B cell (primary cell): ENCODE measurements at regions of chr1 and their contacts with region 1.

Region 1: DNA sequence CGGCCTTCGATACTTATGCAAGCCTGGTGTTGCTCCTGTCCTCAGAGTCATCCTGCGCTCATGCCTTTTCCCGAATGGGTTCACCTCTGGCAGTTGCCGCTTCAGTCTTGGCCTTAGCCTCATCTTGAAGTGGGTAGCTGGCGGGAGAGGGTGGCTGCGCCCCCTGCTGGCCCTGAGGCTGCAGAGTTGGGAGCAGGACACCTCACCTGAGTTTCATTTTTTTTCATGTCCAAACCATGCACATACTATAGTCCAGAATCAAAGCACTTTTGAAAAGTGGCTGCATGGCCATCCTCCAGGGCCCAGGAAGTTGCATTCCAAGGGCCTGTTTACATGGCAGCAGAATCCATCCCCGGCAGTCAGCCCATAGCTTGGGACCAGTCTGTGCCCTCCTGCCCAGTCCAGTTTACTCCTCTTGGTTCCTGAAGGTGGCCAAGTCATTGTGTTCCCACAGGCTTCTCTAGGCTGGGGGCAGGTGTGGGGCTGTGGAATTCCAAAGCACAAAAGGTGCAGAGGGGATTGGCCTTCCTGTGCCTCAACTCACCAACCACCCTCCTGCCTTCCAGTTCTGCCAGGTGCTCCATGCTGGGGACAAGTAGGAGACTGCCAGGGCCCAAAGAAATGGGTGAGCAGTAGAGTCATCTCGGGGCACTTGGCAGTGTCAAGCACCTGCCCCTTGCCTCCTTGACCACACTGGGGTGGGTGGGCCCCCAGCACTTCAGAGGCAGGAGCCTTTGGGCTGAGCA is 44.0 kb downstream of the YARS1 start:
- DNase-seq: peak; percentile 79
- ATAC-seq: peak; percentile 79
- H3K4me3 ChIP-seq: no peak overlapping the region
- H3K4me3 Mint-ChIP-seq: no peak overlapping the region
- H3K27ac ChIP-seq: no peak overlapping the region
- H3K27ac Mint-ChIP-seq: peak overlapping the region; percentile 46
- H3K4me1 ChIP-seq: peaks cover 0 to 3% of the 10 kb centered on the region in 2 donors
- H3K4me1 Mint-ChIP-seq: peaks cover 3% of the 10 kb centered on the region
- H3K27me3 ChIP-seq: no peaks in the 10 kb centered on the region
- H3K27me3 Mint-ChIP-seq: no peaks in the 10 kb centered on the region
- CTCF ChIP-seq: peak; percentile 89

Region 2: GRCh38 chr1:31505911-31506497 is 1267.2 kb before region 1 on chr1:
- CTCF ChIA-PET with region 1: no interaction called
- POLR2A ChIA-PET with region 1: no interaction called
- intact Hi-C with region 1: no loop called
- DNase-seq: peak; percentile 55
- ATAC-seq: peak; percentile 21
- H3K4me3 ChIP-seq: no peak overlapping the region
- H3K4me3 Mint-ChIP-seq: no peak overlapping the region
- H3K27ac ChIP-seq: no peak overlapping the region
- H3K27ac Mint-ChIP-seq: no peak overlapping the region
- H3K4me1 ChIP-seq: peaks cover 15 to 19% of the 10 kb centered on the region in 2 donors
- H3K4me1 Mint-ChIP-seq: peaks cover 12% of the 10 kb centered on the region
- H3K27me3 ChIP-seq: peaks cover 0 to 10% (median 4%) of the 10 kb centered on the region in 4 experiments
- H3K27me3 Mint-ChIP-seq: peaks cover 19% of the 10 kb centered on the region
- CTCF ChIP-seq: no peak

Region 3: GRCh38 chr1:32400876-32401631 is 372.1 kb before region 1 on chr1:
- CTCF ChIA-PET with region 1: interaction called, 57 read pairs
- POLR2A ChIA-PET with region 1: no interaction called
- intact Hi-C with region 1: no loop called
- DNase-seq: peak; percentile 64
- ATAC-seq: peak; percentile 69
- H3K4me3 ChIP-seq: no peak overlapping the region
- H3K4me3 Mint-ChIP-seq: peak overlapping the region; percentile 13
- H3K27ac ChIP-seq: no peak overlapping the region
- H3K27ac Mint-ChIP-seq: no peak overlapping the region
- H3K4me1 ChIP-seq: peaks cover 0 to 3% of the 10 kb centered on the region in 2 donors
- H3K4me1 Mint-ChIP-seq: peaks cover 2% of the 10 kb centered on the region
- H3K27me3 ChIP-seq: no peaks in the 10 kb centered on the region
- H3K27me3 Mint-ChIP-seq: peaks cover 3% of the 10 kb centered on the region
- CTCF ChIP-seq: peak; percentile 79

Region 4: DNA sequence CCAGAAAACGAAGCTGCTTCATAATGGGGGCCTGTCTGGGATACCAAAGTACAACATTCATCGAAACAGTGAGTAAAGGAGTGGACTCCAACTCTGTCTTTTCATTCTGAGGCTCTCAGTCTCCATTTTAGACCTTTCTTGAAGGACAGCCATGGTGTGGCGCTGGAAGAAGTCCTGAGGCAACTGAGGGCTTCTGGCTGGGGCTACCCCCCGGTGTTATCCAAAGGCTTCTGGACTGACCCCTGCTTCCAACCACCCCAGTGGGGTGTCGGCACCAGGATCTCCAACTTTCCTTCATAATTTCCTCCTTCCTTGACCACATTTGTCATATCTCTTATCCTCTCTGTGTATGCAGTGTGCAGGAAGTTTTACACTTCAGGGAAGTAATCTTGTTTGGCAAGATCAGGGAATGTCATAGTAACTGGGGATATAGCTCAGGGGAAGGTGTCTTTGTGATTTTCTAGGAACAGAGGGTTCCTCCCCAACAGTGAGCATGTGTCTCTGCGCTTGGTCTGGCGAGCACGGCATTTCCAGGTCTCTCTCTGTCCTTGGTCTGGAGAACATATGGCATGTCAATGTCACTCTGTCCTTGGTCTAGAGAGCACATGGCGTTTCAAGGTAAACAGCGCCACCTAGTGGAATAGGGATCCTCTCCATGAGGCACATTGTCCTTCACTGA is 359.5 kb before region 1 on chr1:
- CTCF ChIA-PET with region 1: no interaction called
- POLR2A ChIA-PET with region 1: no interaction called
- intact Hi-C with region 1: no loop called
- DNase-seq: peak; percentile 86
- ATAC-seq: peak; percentile 57
- H3K4me3 ChIP-seq: no peak overlapping the region
- H3K4me3 Mint-ChIP-seq: no peak overlapping the region
- H3K27ac ChIP-seq: no peak overlapping the region
- H3K27ac Mint-ChIP-seq: no peak overlapping the region
- H3K4me1 ChIP-seq: no peaks in the 10 kb centered on the region
- H3K4me1 Mint-ChIP-seq: peaks cover 2% of the 10 kb centered on the region
- H3K27me3 ChIP-seq: peaks cover 0 to 6% (median 5%) of the 10 kb centered on the region in 4 experiments
- H3K27me3 Mint-ChIP-seq: peaks cover 19% of the 10 kb centered on the region
- CTCF ChIP-seq: peak; percentile 94

Region 5: GRCh38 chr1:32521165-32521564 is 252.0 kb before region 1 on chr1:
- CTCF ChIA-PET with region 1: interaction called, 76 read pairs
- POLR2A ChIA-PET with region 1: interaction called, 5 read pairs
- intact Hi-C with region 1: no loop called
- DNase-seq: no peak
- ATAC-seq: no peak
- H3K4me3 ChIP-seq: no peak overlapping the region
- H3K4me3 Mint-ChIP-seq: peak overlapping the region; percentile 67
- H3K27ac ChIP-seq: no peak overlapping the region
- H3K27ac Mint-ChIP-seq: no peak overlapping the region
- H3K4me1 ChIP-seq: peaks cover 0 to 7% of the 10 kb centered on the region in 2 donors
- H3K4me1 Mint-ChIP-seq: peaks cover 3% of the 10 kb centered on the region
- H3K27me3 ChIP-seq: no peaks in the 10 kb centered on the region
- H3K27me3 Mint-ChIP-seq: no peaks in the 10 kb centered on the region
- CTCF ChIP-seq: no peak

Region 6: GRCh38 chr1:32716312-32717148 is 56.7 kb before region 1 on chr1:
- CTCF ChIA-PET with region 1: interaction called, 75 read pairs
- POLR2A ChIA-PET with region 1: no interaction called
- intact Hi-C with region 1: loop called (anchors 1 kb)
- DNase-seq: peak; percentile 48
- ATAC-seq: peak; percentile 46
- H3K4me3 ChIP-seq: no peak overlapping the region
- H3K4me3 Mint-ChIP-seq: no peak overlapping the region
- H3K27ac ChIP-seq: no peak overlapping the region
- H3K27ac Mint-ChIP-seq: no peak overlapping the region
- H3K4me1 ChIP-seq: peaks cover 6 to 13% of the 10 kb centered on the region in 2 donors
- H3K4me1 Mint-ChIP-seq: peaks cover 7% of the 10 kb centered on the region
- H3K27me3 ChIP-seq: peaks cover 0 to 27% (median 3%) of the 10 kb centered on the region in 4 experiments
- H3K27me3 Mint-ChIP-seq: peaks cover 16% of the 10 kb centered on the region
- CTCF ChIP-seq: no peak

Region 7: DNA sequence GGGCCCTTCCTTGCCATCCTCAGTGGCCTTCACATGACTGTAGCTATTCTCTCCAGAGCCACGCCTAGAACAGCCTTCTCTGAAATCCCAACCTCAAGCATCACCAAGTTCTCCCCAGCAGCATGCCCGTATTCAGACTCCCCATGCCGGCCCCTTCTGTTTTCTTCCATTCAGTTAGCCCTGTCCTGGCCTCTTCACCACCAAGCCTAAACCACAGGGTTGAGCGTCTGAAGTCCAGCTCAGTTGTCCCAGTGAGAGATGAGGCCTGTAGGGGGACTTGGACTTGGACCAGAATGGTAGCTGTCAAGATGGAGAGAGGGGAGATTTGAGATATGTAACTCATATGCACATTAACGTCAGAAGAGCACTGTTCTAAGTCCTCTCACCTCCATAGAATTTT is 133.4 kb after region 1 on chr1:
- CTCF ChIA-PET with region 1: no interaction called
- POLR2A ChIA-PET with region 1: interaction called, 10 read pairs
- intact Hi-C with region 1: no loop called
- DNase-seq: no peak
- ATAC-seq: no peak
- H3K4me3 ChIP-seq: no peak overlapping the region
- H3K4me3 Mint-ChIP-seq: no peak overlapping the region
- H3K27ac ChIP-seq: no peak overlapping the region
- H3K27ac Mint-ChIP-seq: no peak overlapping the region
- H3K4me1 ChIP-seq: peaks cover under 1 to 2% of the 10 kb centered on the region in 2 donors
- H3K4me1 Mint-ChIP-seq: peaks cover 5% of the 10 kb centered on the region
- H3K27me3 ChIP-seq: peaks cover 0 to 16% (median 6%) of the 10 kb centered on the region in 4 experiments
- H3K27me3 Mint-ChIP-seq: peaks cover 30% of the 10 kb centered on the region
- CTCF ChIP-seq: no peak